PC-9 (cell line): ENCODE measurements at regions of chr6 and their contacts with region 1.

Region 1: DNA sequence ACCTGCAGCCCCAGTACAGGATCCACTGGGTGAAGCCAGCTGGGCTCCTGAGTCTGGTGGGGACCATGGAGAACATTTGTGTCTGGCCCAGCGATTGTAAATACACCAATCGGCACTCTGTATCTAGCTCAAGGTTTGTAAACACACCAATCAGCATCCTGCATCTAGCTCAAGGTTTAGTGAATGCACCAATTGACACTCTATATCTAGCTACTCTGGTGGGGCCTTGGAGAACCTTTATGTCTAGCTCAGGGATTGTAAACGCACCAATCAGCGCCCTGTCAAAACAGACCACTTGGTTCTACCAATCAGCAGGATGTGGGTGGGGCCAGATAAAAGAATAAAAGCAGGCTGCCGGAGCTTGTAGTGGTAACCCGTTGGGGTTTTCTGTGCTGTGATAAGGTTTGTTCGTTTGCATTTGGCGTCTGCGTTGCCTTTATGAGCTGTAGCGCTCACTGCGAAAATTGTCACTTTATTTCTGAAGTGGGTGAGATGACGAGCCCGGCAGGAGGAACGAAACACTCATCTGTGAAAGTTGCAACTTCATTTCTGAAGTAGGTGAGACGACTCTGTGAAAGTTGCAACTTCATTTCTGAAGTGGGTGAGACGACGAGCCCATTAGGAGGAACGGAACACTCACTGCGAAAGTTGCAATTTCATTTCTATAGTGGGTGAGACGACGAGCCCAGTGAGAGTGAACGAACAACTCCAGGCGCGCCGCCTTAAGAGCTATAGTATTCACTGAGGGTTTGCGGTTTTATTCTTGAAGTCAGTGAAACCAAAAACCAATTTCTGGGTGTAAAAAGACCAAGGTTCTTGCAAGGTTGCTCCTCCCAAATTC is 31.1 kb downstream of the SERPINB6 start:
- DNase-seq: no peak
- H3K4me3 ChIP-seq: no peak overlapping the region
- H3K27ac ChIP-seq: no peak overlapping the region
- H3K4me1 ChIP-seq: no peaks in the 10 kb centered on the region
- H3K27me3 ChIP-seq: no peaks in the 10 kb centered on the region
- CTCF ChIP-seq: no peak

Region 2: DNA sequence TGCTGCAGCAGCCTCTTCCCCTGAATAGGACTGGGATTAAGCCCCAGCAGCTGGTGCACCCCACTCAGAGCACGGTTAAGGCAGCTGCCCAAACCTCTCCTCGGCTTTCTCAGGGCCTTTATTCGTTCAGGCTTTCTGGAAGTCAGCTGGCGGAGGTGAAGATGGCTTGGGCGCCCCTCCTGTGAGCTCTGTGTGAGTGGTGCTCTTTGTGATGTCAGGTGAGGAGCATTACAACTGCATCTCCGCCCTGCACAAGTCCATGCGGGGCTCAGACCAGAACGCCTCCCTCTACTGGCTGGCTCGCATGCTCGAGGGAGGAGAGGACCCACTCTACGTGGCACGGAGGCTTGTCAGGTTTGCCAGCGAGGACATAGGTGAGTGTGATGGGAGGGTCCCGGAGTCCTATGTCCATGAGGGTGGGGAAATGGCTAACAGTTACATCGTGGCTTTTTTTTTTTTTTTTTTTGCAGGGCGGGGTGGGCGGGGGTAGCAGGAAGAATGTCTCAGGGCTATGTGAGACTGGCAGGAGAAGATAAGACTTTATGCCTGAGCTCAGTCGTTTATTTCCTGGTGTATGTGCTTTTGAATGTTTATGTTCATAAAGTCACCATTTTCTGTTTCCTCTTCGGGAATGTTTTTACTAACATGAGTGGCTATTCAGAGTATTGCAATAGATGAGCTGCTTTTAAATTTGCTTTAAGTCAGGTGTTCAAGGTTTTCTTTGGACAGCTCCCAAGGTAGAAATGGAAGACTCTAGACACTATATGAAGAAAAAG is 156.9 kb before region 1 on chr6:
- CTCF ChIA-PET with region 1: no interaction called
- POLR2A ChIA-PET with region 1: interaction called, 27 read pairs
- intact Hi-C with region 1: no loop called
- DNase-seq: no peak
- H3K4me3 ChIP-seq: no peak overlapping the region
- H3K27ac ChIP-seq: no peak overlapping the region
- H3K4me1 ChIP-seq: no peaks in the 10 kb centered on the region
- H3K27me3 ChIP-seq: no peaks in the 10 kb centered on the region
- CTCF ChIP-seq: no peak

Region 3: DNA sequence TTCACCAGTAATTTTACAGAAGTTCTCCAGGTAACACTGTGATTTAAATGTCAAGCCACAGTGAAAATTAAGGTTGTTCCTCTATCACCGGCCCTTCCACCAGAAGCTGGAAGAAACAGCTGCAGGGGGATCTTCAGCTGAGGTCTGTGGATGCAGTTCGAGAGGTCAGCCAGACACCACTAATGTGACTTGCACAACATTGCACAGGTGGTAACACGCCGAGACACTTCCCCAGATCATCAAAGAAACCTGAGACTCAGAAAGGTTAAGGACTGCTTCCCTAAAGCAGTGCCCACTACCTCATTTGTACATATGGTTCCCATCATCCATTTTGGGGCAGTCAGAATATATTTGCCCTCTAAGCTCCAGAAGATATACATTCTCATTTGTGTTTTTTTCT is 29.1 kb before region 1 on chr6:
- CTCF ChIA-PET with region 1: no interaction called
- POLR2A ChIA-PET with region 1: interaction called, 10 read pairs
- intact Hi-C with region 1: no loop called
- DNase-seq: no peak
- H3K4me3 ChIP-seq: no peak overlapping the region
- H3K27ac ChIP-seq: no peak overlapping the region
- H3K4me1 ChIP-seq: no peaks in the 10 kb centered on the region
- H3K27me3 ChIP-seq: no peaks in the 10 kb centered on the region
- CTCF ChIP-seq: no peak

Region 4: DNA sequence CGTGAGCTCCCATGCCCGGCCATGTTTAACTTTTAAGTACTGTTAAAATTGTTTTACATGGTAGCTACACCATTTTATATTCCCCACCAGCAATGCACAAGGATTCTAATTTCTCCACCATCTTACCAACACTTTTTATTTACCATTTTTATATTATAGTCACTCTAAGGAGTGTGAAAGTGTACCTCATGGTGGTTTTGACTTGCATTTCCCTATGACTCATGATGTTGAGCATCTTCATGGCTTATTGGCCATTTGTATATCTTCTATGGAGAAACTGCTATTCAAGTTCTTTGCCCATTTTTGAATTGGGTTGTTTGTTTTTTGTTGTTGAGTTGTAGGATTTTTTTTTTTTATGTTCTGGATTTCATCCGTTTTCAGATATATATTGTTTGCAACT is 162.6 kb after region 1 on chr6:
- CTCF ChIA-PET with region 1: interaction called, 11 read pairs
- POLR2A ChIA-PET with region 1: no interaction called
- intact Hi-C with region 1: no loop called
- DNase-seq: no peak
- H3K4me3 ChIP-seq: no peak overlapping the region
- H3K27ac ChIP-seq: no peak overlapping the region
- H3K4me1 ChIP-seq: no peaks in the 10 kb centered on the region
- H3K27me3 ChIP-seq: no peaks in the 10 kb centered on the region
- CTCF ChIP-seq: no peak